Naive thymus-derived CD4-positive, alpha-beta T cell (primary cell): ENCODE measurements at regions of chr15 and their contacts with region 1.

Region 1: DNA sequence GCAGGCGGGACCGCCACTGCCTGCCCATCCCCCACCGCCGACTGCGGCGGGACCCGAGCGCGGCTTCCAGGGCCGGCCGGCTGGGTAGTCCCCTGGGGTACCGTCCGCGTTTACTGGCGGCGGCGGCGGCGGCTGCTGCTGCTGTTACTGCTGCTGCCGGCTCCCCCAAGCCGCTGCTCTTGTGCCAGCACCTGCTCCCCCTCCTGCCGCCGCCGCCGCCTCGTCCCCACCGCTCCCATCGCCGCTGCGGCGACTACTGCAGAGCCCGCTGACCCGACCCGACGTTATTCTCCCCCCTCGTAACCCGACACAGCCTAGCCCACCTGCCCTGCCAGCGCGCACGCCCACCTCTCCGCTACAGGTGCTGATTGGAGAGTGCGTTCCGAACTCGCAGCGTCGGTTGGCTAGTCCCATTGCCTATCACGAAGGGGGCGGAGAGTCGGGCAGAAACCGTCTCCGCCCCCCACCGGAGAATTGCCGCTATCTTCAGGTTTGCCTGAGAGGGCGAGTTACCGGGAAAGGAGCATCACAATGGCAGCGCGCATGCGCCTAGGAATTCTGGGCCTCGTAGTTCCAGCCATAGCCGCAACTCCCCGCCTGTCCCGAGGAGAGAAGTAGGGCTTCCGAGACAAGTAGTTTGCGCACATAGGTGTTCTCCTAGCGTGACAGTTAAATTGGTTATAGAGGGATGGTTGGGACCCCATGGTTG is at the start of gene TTBK2:
- DNase-seq: peak; percentile 93 to 98 (median 97)
- ATAC-seq: peak; percentile 98
- H3K4me3 ChIP-seq: peak within 1 kb of the TSS; percentile 89
- H3K4me3 Mint-ChIP-seq: peak within 1 kb of the TSS; percentile 93 to 100 (median 97)
- H3K27ac ChIP-seq: peak within 1 kb of the TSS; percentile 71
- H3K27ac Mint-ChIP-seq: peak within 1 kb of the TSS; percentile 88 to 97 (median 95)
- H3K4me1 ChIP-seq: peaks cover 4 to 5% of the 10 kb centered on the region in 2 donors
- H3K4me1 Mint-ChIP-seq: peaks cover 14 to 40% (median 29%) of the 10 kb centered on the region in 7 donors
- H3K27me3 ChIP-seq: no peaks in the 10 kb centered on the region
- H3K27me3 Mint-ChIP-seq: peaks cover 0 to 3% (median 0%) of the 10 kb centered on the region in 5 donors
- total RNA-seq, gene TTBK2: 15.7 to 30.5 (median 28.8) TPM

Region 2: DNA sequence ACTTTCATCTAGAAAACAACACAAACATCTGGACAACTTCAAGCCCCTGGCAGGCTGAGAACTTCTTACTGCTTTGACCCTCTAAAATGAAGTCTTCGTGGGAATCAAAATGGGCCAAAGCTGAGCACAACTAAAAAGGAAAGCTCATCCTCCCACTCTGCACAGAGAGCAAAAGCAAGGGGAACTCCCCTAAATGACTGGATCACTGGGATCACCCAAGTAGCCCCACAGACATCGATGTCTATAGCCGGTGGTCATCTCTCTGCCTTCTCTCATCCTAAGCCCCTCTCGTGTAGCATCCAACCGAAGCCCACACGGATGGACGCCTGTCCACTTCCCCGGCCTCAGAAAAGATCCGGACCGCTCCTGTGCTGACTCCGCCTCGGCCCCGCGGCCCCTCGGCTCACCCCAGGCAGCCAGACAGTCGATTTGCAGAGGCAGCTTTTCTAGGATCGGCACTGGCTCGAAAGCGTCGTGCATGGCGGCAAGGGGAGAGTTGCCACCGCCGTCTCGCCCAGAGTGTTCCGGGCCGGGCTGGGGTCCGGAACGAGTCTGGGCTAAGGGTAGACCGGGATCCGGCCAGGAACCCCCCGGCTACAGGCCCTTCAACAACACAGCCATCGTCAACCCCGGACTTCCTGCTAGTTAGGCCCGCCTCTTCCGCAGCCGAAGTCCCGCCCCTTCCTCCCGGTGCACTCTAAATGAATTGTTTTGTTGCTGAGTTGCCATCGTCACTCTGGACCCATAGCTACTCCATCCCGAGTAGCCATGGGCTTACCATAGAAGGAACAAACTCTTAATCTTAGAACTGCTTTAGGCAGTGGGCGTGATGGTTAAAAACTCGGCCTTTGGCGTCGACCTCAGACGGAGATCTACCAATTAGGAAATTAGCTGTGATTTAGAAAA is 712.7 kb before region 1 on chr15 and contains the start of gene VPS39:
- CTCF ChIA-PET with region 1: no interaction called
- POLR2A ChIA-PET with region 1: no interaction called
- intact Hi-C with region 1: loop called in 1 of 2 experiments (anchors 10 kb)
- DNase-seq: peak; percentile 58 to 82 (median 79)
- ATAC-seq: peak; percentile 98
- H3K4me3 ChIP-seq: peak within 1 kb of the TSS; percentile 95
- H3K4me3 Mint-ChIP-seq: peak within 1 kb of the TSS; percentile 79 to 97 (median 95)
- H3K27ac ChIP-seq: peak within 1 kb of the TSS; percentile 89
- H3K27ac Mint-ChIP-seq: peak within 1 kb of the TSS; percentile 79 to 97 (median 93)
- H3K4me1 ChIP-seq: peaks cover 18 to 22% of the 10 kb centered on the region in 2 donors
- H3K4me1 Mint-ChIP-seq: peaks cover 29 to 50% (median 42%) of the 10 kb centered on the region in 7 donors
- H3K27me3 ChIP-seq: no peaks in the 10 kb centered on the region
- H3K27me3 Mint-ChIP-seq: no peaks in the 10 kb centered on the region
- total RNA-seq, gene VPS39: 82.9 to 115 (median 97.3) TPM

Region 3: GRCh38 chr15:42575188-42576039 is 345.3 kb before region 1 on chr15 and contains the start of gene STARD9:
- CTCF ChIA-PET with region 1: no interaction called
- POLR2A ChIA-PET with region 1: no interaction called
- intact Hi-C with region 1: loop called (anchors 1 to 2 kb)
- DNase-seq: peak; percentile 84 to 96 (median 93)
- ATAC-seq: peak; percentile 96
- H3K4me3 ChIP-seq: peak within 1 kb of the TSS; percentile 81
- H3K4me3 Mint-ChIP-seq: peak within 1 kb of the TSS; percentile 74 to 95 (median 92)
- H3K27ac ChIP-seq: peak within 1 kb of the TSS; percentile 58
- H3K27ac Mint-ChIP-seq: peak within 1 kb of the TSS; percentile 10 to 84 (median 76)
- H3K4me1 ChIP-seq: peaks cover 7 to 12% of the 10 kb centered on the region in 2 donors
- H3K4me1 Mint-ChIP-seq: peaks cover 14 to 36% (median 19%) of the 10 kb centered on the region in 7 donors
- H3K27me3 ChIP-seq: no peaks in the 10 kb centered on the region
- H3K27me3 Mint-ChIP-seq: peaks cover 6 to 35% (median 13%) of the 10 kb centered on the region in 5 donors
- total RNA-seq, gene STARD9: 2.4 to 10.5 (median 4.5) TPM

Region 4: DNA sequence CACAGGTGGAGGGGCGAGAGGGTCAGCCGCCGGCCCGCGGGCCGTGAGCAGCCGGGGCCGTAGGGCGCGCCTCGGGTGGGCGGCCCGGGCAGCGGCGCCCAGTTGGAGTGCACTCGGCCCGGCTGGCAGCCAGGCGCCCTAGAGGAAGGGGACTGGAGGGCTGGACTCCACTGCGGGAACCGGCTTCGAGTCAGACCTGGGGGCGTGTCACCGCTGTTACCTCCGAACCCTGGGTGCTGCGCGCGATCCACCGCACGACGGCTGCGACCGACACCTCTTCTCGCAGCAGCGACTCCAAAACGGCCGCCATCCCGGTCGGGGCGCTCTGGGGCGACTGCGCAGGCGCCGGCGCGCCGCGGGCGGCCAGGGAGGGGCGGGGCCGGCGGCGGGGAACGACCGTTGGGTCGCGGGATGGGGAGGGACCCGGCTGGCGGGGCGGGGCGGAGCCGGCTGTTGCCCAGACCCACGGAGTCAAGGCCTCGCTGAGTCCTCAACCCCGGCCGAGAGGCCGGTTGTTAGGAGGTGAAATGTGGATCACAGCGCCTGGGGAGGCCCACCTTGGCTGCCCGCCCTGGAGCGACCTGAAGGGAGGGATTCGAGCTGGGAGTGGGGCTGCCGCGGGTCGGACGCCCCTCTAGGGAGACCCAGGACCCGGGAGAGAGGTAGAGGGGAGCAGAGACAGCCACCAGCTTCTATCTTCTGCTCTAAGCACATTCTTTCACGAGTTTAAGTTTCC is 183.7 kb before region 1 on chr15 and contains the start of gene CDAN1:
- CTCF ChIA-PET with region 1: no interaction called
- POLR2A ChIA-PET with region 1: interaction called, 4 read pairs
- intact Hi-C with region 1: loop called (anchors 1 kb)
- DNase-seq: peak; percentile 80 to 95 (median 87)
- ATAC-seq: peak; percentile 97
- H3K4me3 ChIP-seq: peak within 1 kb of the TSS; percentile 65
- H3K4me3 Mint-ChIP-seq: peak within 1 kb of the TSS; percentile 79 to 90 (median 86)
- H3K27ac ChIP-seq: peak within 1 kb of the TSS; percentile 87
- H3K27ac Mint-ChIP-seq: peak within 1 kb of the TSS; percentile 78 to 91 (median 86)
- H3K4me1 ChIP-seq: peaks cover 5 to 6% of the 10 kb centered on the region in 2 donors
- H3K4me1 Mint-ChIP-seq: peaks cover 13 to 26% (median 20%) of the 10 kb centered on the region in 7 donors
- H3K27me3 ChIP-seq: no peaks in the 10 kb centered on the region
- H3K27me3 Mint-ChIP-seq: no peaks in the 10 kb centered on the region
- total RNA-seq, gene CDAN1: 25.8 to 38.0 (median 28.3) TPM